ENCODE measurements at regions of chr18 and their contacts with region 1.

Region 1: DNA sequence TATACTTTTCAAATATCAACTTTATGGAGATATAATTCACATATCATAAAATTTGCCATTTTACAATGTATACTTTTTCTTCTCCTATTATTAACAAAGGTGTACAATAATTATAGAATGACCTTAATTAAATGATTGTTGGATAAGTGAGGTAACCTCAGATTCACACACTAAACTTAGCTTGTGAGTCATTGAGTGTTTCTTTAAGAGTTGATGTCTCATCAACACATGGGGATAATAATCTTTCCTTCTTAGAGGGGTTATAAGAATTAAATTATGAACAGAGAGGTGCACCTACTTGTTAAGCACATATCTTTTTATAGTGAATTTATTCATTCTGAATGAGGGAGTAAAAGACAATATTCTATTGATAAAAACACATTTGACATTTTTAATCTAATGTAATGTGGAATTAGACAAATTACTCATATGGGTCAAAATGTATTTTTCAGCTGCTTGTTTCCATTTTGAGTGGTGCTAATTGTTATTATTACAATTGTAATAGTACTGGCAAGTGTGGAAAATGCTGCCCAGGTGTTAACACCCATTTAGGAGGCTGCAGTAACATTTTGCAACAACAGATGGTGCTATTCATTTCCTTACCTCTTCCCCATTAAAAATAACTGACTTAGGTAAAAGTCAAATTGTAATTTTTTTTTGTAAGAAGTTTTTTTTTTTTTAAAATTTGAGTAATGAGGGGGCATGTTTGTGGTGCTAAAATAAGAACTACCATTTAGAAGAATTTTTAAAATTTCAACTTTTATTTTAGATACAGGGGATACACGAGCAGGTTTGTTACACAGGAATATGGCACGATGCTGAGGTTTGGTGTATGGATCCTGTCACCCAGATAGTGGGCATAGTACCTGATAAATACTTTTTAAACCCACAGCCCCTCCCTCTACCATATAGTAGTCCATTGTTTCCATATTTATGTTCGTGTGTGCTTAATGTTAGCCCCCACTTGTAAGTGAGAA is 32.1 kb upstream of the DYNAP start:
- DNase-seq: peak; percentile 25
- H3K4me3 ChIP-seq: no peak overlapping the region
- H3K27ac ChIP-seq: no peak overlapping the region
- H3K4me1 ChIP-seq: no peaks in the 10 kb centered on the region
- H3K27me3 ChIP-seq: no peaks in the 10 kb centered on the region
- CTCF ChIP-seq: peak; percentile 31 to 60
- POLR2A ChIP-seq: no peak

Region 2: GRCh38 chr18:54466248-54467005 is 92.5 kb before region 1 on chr18:
- CTCF ChIA-PET with region 1: no interaction called
- POLR2A ChIA-PET with region 1: no interaction called
- dilution Hi-C with region 1: no loop called
- intact Hi-C with region 1: no loop called
- DNase-seq: no peak
- H3K4me3 ChIP-seq: no peak overlapping the region
- H3K27ac ChIP-seq: no peak overlapping the region
- H3K4me1 ChIP-seq: no peaks in the 10 kb centered on the region
- H3K27me3 ChIP-seq: no peaks in the 10 kb centered on the region
- CTCF ChIP-seq: no peak
- POLR2A ChIP-seq: no peak

Region 3: GRCh38 chr18:54515149-54515548 is 43.7 kb before region 1 on chr18:
- CTCF ChIA-PET with region 1: no interaction called
- POLR2A ChIA-PET with region 1: no interaction called
- dilution Hi-C with region 1: no loop called
- intact Hi-C with region 1: no loop called
- DNase-seq: no peak
- H3K4me3 ChIP-seq: no peak overlapping the region
- H3K27ac ChIP-seq: no peak overlapping the region
- H3K4me1 ChIP-seq: no peaks in the 10 kb centered on the region
- H3K27me3 ChIP-seq: no peaks in the 10 kb centered on the region
- CTCF ChIP-seq: no peak
- POLR2A ChIP-seq: no peak

Region 4: DNA sequence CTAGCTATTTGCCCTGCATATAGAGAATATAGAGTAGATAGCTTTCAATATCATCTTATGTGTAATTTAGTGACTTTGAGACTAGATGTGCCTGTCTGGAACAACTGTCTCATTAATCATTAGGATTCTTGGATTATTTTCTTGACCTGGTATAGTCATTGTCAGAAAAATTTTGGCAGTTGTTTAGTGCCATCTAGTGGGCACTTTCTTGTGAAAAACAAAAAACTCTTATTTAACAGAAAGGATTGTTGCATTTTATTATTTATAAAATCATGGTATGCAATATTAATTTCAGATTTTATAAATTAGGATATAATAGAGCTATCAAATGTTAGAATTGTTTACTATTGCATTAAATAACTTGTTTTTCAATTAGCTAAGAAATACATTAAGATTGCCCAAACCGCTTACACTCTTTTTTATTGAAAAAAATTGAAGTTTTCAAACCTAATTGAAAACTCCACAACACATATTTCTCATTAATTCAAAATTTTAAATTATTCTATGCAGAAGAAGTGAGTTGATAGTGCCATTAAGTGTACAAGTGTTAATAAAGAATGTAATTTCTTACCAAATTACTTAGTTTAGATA is 112.5 kb after region 1 on chr18:
- CTCF ChIA-PET with region 1: interaction called, 3 read pairs
- POLR2A ChIA-PET with region 1: no interaction called
- dilution Hi-C with region 1: no loop called
- intact Hi-C with region 1: loop called (anchors 1 kb)
- DNase-seq: peak; percentile 46
- H3K4me3 ChIP-seq: no peak overlapping the region
- H3K27ac ChIP-seq: no peak overlapping the region
- H3K4me1 ChIP-seq: no peaks in the 10 kb centered on the region
- H3K27me3 ChIP-seq: no peaks in the 10 kb centered on the region
- CTCF ChIP-seq: peak; percentile 20 to 33
- POLR2A ChIP-seq: no peak

Region 5: GRCh38 chr18:54983041-54983686 is 424.3 kb after region 1 on chr18:
- CTCF ChIA-PET with region 1: interaction called, 7 read pairs
- POLR2A ChIA-PET with region 1: no interaction called
- dilution Hi-C with region 1: no loop called
- intact Hi-C with region 1: loop called (anchors 1 kb)
- DNase-seq: peak; percentile 59
- H3K4me3 ChIP-seq: no peak overlapping the region
- H3K27ac ChIP-seq: no peak overlapping the region
- H3K4me1 ChIP-seq: no peaks in the 10 kb centered on the region
- H3K27me3 ChIP-seq: no peaks in the 10 kb centered on the region
- CTCF ChIP-seq: peak; percentile 33 to 41
- POLR2A ChIP-seq: no peak

Measured in endothelial cell of umbilical vein (primary cell).